PC-3 (cell line): ENCODE measurements at regions of chr3 and their contacts with region 1.

Region 1: GRCh38 chr3:189985938-189986337 is 134.8 kb downstream of the P3H2 start:
- DNase-seq: peak; percentile 83
- ATAC-seq: peak; percentile 57
- H3K4me3 ChIP-seq: no peak overlapping the region
- H3K27ac ChIP-seq: no peak overlapping the region
- H3K4me1 ChIP-seq: peaks cover 31% of the 10 kb centered on the region
- H3K27me3 ChIP-seq: no peaks in the 10 kb centered on the region
- CTCF ChIP-seq: no peak

Region 2: GRCh38 chr3:190003681-190004123 is 17.8 kb after region 1 on chr3:
- CTCF ChIA-PET with region 1: no interaction called
- POLR2A ChIA-PET with region 1: no interaction called
- intact Hi-C with region 1: loop called (anchors 2 kb)
- DNase-seq: peak; percentile 93
- ATAC-seq: peak; percentile 98
- H3K4me3 ChIP-seq: no peak overlapping the region
- H3K27ac ChIP-seq: 0 out of 2 replicates have a peak overlapping the region, but pooled peaks have one; percentile 8
- H3K4me1 ChIP-seq: peaks cover 36% of the 10 kb centered on the region
- H3K27me3 ChIP-seq: no peaks in the 10 kb centered on the region
- CTCF ChIP-seq: no peak

Region 3: GRCh38 chr3:190038050-190038933 is 52.4 kb after region 1 on chr3:
- CTCF ChIA-PET with region 1: no interaction called
- POLR2A ChIA-PET with region 1: interaction called, 17 read pairs
- intact Hi-C with region 1: no loop called
- DNase-seq: peak; percentile 72
- ATAC-seq: peak; percentile 76
- H3K4me3 ChIP-seq: no peak overlapping the region
- H3K27ac ChIP-seq: no peak overlapping the region
- H3K4me1 ChIP-seq: peaks cover 9% of the 10 kb centered on the region; the same call in 1 of the 2 replicates
- H3K27me3 ChIP-seq: no peaks in the 10 kb centered on the region
- CTCF ChIP-seq: no peak